ENCODE measurements at regions of chr5 and their contacts with region 1.

Region 1: GRCh38 chr5:120463991-120464626 is at the start of gene PRR16:
- DNase-seq: peak; percentile 69 to 77
- ATAC-seq: peak; percentile 86 to 91 (median 88)
- H3K4me3 ChIP-seq: peak within 1 kb of the TSS; percentile 76
- H3K27ac ChIP-seq: peak within 1 kb of the TSS; percentile 74
- H3K4me1 ChIP-seq: peaks cover 20% of the 10 kb centered on the region
- H3K27me3 ChIP-seq: no peaks in the 10 kb centered on the region
- CTCF ChIP-seq: peak; percentile 32
- total RNA-seq, gene PRR16: 1.8 to 12.1 (median 4.4) TPM

Region 2: DNA sequence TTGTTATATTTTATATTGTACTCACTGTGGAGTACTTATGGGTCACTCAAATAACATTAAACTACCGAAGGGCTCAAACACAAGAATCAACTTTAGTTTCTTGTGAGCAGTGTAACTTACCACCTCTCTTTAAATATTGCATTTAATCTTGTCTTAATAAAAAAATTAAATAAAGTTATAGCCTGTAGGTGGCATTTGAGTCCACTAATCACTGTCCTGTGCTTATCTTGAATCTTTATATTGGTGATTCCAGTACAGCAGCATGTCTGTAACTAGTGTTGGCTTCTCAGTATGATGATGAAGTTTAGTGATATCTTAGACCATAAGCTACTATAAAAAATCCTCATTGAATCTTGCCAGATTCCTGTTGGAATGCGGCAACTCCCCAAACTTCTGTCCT is 521.0 kb before region 1 on chr5:
- intact Hi-C with region 1: loop called in 1 of 2 experiments (anchors 10 kb)
- DNase-seq: no peak
- ATAC-seq: no peak
- H3K4me3 ChIP-seq: no peak overlapping the region
- H3K27ac ChIP-seq: no peak overlapping the region
- H3K4me1 ChIP-seq: no peaks in the 10 kb centered on the region
- H3K27me3 ChIP-seq: no peaks in the 10 kb centered on the region
- CTCF ChIP-seq: peak; percentile 23

Region 3: DNA sequence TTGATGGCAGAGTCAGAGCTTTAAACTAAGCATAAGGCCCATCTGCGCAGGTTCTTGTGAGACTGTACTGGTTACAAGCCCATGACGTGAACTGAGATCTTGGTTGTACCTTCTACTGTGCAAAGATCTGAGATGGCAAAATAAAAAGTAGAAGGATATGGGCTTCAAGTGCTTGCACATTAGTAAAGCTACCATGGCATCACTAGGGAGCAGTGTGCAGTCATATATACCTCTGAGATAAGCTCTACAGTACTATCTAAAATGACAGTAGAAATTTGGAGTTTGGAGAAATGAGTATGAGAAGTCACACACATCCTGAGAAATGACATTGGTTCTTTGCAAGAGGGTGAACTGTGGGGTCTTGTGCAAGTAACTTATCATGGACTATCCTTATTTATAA is 408.3 kb before region 1 on chr5:
- intact Hi-C with region 1: loop called (anchors 10 kb)
- DNase-seq: no peak
- ATAC-seq: peak in 3 of 4 donors; percentile 59 to 79 (median 66)
- H3K4me3 ChIP-seq: no peak overlapping the region
- H3K27ac ChIP-seq: no peak overlapping the region
- H3K4me1 ChIP-seq: no peaks in the 10 kb centered on the region
- H3K27me3 ChIP-seq: no peaks in the 10 kb centered on the region
- CTCF ChIP-seq: peak; percentile 6

Region 4: DNA sequence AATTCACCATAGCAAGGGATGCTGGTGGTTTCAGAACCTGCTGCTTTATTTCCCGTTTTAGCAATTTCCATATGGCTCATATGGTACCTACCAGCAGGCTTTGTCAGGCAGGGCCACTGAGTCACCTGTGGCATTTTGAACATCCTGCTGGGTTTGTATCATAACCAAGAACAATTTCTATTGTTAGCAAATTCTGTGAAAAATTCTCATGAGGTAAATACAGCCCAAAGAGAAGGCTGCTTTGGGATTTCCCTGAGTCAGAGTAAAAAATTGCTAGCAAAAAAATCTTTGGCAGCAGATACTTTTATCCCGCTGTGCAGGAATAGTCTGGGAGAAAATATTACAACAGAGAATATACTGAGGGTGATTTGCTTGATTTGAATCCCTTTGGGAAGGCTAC is 52.7 kb after region 1 on chr5:
- intact Hi-C with region 1: no loop called
- DNase-seq: no peak
- ATAC-seq: no peak
- H3K4me3 ChIP-seq: no peak overlapping the region
- H3K27ac ChIP-seq: no peak overlapping the region
- H3K4me1 ChIP-seq: no peaks in the 10 kb centered on the region
- H3K27me3 ChIP-seq: no peaks in the 10 kb centered on the region
- CTCF ChIP-seq: no peak

Measured in psoas muscle (tissue), 8 donors.